ENCODE measurements at regions of chr10 and their contacts with region 1.

Region 1: GRCh38 chr10:122525788-122526187 is 34.8 kb upstream of the DMBT1 start:
- DNase-seq: no peak
- H3K4me3 ChIP-seq: no peak overlapping the region
- H3K27ac ChIP-seq: no peak overlapping the region
- H3K4me1 ChIP-seq: no peaks in the 10 kb centered on the region
- H3K27me3 ChIP-seq: peaks cover 7% of the 10 kb centered on the region
- CTCF ChIP-seq: peak; percentile 27 to 44 (median 37)

Region 2: DNA sequence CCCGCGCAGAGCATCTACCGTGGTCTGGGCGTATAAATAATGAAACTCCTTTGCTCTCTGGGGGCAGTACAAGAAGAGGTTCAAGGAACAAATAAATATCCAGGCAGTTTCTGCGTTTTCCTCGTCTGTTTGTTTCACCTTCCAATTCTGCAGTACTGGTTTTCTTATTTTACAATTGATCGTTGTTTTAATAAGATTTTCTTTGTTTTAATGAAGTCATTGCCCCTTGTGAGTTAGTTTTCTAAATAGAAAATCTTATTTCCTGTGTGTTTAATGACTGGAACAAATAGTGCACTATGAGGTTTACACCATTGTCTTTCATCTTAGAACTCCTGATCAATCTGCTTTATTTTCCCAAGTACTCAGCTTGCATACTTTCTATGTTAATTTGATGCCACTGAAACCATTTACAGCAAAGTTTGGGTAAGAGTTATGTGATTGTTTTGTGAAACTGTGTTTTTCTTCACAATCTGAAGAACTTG is 150.1 kb before region 1 on chr10:
- dilution Hi-C with region 1: no loop called
- DNase-seq: no peak
- H3K4me3 ChIP-seq: peak overlapping the region; percentile 78 to 95 (median 91)
- H3K27ac ChIP-seq: peak overlapping the region; percentile 95
- H3K4me1 ChIP-seq: peaks cover 21% of the 10 kb centered on the region
- H3K27me3 ChIP-seq: no peaks in the 10 kb centered on the region
- CTCF ChIP-seq: no peak

Region 3: GRCh38 chr10:122703439-122704118 is 177.8 kb after region 1 on chr10:
- dilution Hi-C with region 1: loop called (anchors 25 kb)
- DNase-seq: peak; percentile 32
- H3K4me3 ChIP-seq: no peak overlapping the region
- H3K27ac ChIP-seq: no peak overlapping the region
- H3K4me1 ChIP-seq: no peaks in the 10 kb centered on the region
- H3K27me3 ChIP-seq: no peaks in the 10 kb centered on the region
- CTCF ChIP-seq: peak; percentile 89 to 95 (median 93)

Region 4: DNA sequence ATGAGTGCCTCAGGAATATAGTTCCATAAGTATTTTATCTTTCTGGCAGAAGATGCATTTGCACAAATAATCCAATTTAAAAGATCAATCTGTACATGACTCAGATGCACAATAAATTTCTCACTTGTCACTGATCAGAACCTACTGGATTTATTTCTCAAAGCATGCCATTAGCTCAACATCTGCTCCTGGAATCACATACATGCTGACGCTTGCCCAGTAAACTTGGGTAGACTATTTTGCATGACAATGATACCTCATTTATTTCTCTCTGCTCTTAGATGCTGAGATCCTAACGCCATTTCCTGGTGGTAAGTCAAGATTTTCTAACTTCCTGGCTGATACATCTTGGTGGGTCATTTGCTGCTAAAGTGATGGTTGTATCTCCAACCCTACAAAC is 207.6 kb after region 1 on chr10:
- dilution Hi-C with region 1: no loop called
- DNase-seq: no peak
- H3K4me3 ChIP-seq: no peak overlapping the region
- H3K27ac ChIP-seq: no peak overlapping the region
- H3K4me1 ChIP-seq: peaks cover 4% of the 10 kb centered on the region
- H3K27me3 ChIP-seq: peaks cover 3% of the 10 kb centered on the region
- CTCF ChIP-seq: no peak

Region 5: GRCh38 chr10:122746408-122746807 is 220.6 kb after region 1 on chr10:
- dilution Hi-C with region 1: no loop called
- DNase-seq: peak; percentile 73
- H3K4me3 ChIP-seq: no peak overlapping the region
- H3K27ac ChIP-seq: no peak overlapping the region
- H3K4me1 ChIP-seq: peaks cover 18% of the 10 kb centered on the region
- H3K27me3 ChIP-seq: no peaks in the 10 kb centered on the region
- CTCF ChIP-seq: no peak

Measured in keratinocyte (primary cell).